MCF 10A (cell line): ENCODE measurements at regions of chr18 and their contacts with region 1.

Region 1: GRCh38 chr18:47204908-47205522 is 28.9 kb upstream of the IER3IP1 start:
- DNase-seq: peak; percentile 61
- H3K4me3 Mint-ChIP-seq: no peak overlapping the region
- H3K27ac Mint-ChIP-seq: no peak overlapping the region
- H3K4me1 Mint-ChIP-seq: no peaks in the 10 kb centered on the region
- H3K27me3 Mint-ChIP-seq: peaks cover 62% of the 10 kb centered on the region
- CTCF ChIP-seq: peak; percentile 86

Region 2: GRCh38 chr18:47067648-47068047 is 137.4 kb before region 1 on chr18:
- CTCF ChIA-PET with region 1: interaction called, 20 read pairs
- POLR2A ChIA-PET with region 1: no interaction called
- intact Hi-C with region 1: no loop called
- DNase-seq: no peak
- H3K4me3 Mint-ChIP-seq: no peak overlapping the region
- H3K27ac Mint-ChIP-seq: no peak overlapping the region
- H3K4me1 Mint-ChIP-seq: no peaks in the 10 kb centered on the region
- H3K27me3 Mint-ChIP-seq: no peaks in the 10 kb centered on the region
- CTCF ChIP-seq: no peak

Region 3: GRCh38 chr18:47113796-47114540 is 91.0 kb before region 1 on chr18:
- CTCF ChIA-PET with region 1: interaction called, 25 read pairs
- POLR2A ChIA-PET with region 1: no interaction called
- intact Hi-C with region 1: no loop called
- DNase-seq: no peak
- H3K4me3 Mint-ChIP-seq: no peak overlapping the region
- H3K27ac Mint-ChIP-seq: no peak overlapping the region
- H3K4me1 Mint-ChIP-seq: peaks cover 5% of the 10 kb centered on the region
- H3K27me3 Mint-ChIP-seq: no peaks in the 10 kb centered on the region
- CTCF ChIP-seq: no peak

Region 4: GRCh38 chr18:47191961-47192360 is 13.1 kb before region 1 on chr18:
- CTCF ChIA-PET with region 1: interaction called, 60 read pairs
- POLR2A ChIA-PET with region 1: interaction called, 4 read pairs
- intact Hi-C with region 1: no loop called
- DNase-seq: peak; percentile 62
- H3K4me3 Mint-ChIP-seq: no peak overlapping the region
- H3K27ac Mint-ChIP-seq: no peak overlapping the region
- H3K4me1 Mint-ChIP-seq: no peaks in the 10 kb centered on the region
- H3K27me3 Mint-ChIP-seq: peaks cover 61% of the 10 kb centered on the region
- CTCF ChIP-seq: no peak

Region 5: DNA sequence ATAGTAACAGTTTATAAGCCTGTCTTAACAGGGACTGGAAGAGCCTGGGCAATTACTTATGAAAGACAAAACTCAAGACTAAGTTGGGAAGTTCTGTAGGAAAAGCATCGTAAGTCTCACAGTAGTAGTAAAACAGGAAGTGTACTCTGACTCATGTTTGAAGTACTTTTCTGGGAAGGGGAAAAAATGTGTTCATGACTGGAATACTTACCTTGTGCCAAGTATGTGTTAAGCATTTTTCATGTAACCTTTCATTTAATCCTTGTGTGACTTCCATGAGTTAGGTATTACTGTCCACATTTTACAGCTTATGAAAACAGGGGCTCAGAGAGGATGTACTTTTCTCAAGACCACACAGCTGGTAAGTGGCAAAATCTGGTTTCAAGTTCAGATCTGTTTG is 60.2 kb after region 1 on chr18:
- CTCF ChIA-PET with region 1: no interaction called
- POLR2A ChIA-PET with region 1: no interaction called
- intact Hi-C with region 1: no loop called
- DNase-seq: peak; percentile 68
- H3K4me3 Mint-ChIP-seq: no peak overlapping the region
- H3K27ac Mint-ChIP-seq: no peak overlapping the region
- H3K4me1 Mint-ChIP-seq: peaks cover 7% of the 10 kb centered on the region
- H3K27me3 Mint-ChIP-seq: peaks cover 14% of the 10 kb centered on the region
- CTCF ChIP-seq: no peak

Region 6: DNA sequence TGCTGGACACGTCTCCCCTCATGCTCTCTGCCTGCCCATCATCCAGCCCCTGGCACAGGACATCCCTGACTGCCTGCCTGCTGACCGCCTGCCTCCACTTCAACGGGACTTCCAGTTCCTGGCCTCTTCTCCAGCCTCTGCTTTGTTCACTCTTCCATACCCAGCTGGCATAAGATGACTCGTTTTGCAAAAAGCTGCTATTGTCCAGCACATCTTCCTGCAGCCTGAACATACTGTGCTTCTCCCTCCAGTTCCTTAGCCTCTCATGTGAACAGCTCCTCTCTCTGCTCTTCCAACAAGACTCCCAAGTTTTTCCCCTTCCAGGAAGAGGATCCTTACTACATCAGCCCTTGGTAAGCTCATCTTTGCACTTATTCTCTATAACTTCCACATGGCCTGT is 108.9 kb after region 1 on chr18:
- CTCF ChIA-PET with region 1: no interaction called
- POLR2A ChIA-PET with region 1: no interaction called
- intact Hi-C with region 1: no loop called
- DNase-seq: no peak
- H3K4me3 Mint-ChIP-seq: no peak overlapping the region
- H3K27ac Mint-ChIP-seq: no peak overlapping the region
- H3K4me1 Mint-ChIP-seq: no peaks in the 10 kb centered on the region
- H3K27me3 Mint-ChIP-seq: peaks cover 46% of the 10 kb centered on the region
- CTCF ChIP-seq: no peak

Region 7: DNA sequence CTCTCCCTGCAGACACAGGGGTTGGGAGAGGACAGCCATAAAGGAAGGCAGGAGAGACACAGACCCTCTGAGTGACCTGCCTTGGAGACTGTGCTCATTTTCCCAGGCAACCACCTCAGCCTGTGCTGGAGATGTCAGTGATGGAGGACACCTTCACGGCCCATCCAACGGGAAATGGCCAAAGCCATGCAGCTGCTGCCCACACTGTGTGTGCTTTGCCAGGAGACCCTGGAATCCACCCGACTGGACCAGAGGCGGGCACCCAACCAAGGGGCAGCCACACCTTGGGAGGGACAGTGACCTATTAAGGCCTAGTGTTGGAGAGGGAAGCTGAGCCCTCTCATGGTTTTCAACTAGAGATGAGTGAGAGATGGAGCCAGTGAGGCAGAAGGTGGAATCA is 532.9 kb after region 1 on chr18:
- CTCF ChIA-PET with region 1: interaction called, 13 read pairs
- POLR2A ChIA-PET with region 1: no interaction called
- intact Hi-C with region 1: no loop called
- DNase-seq: no peak
- H3K4me3 Mint-ChIP-seq: no peak overlapping the region
- H3K27ac Mint-ChIP-seq: no peak overlapping the region
- H3K4me1 Mint-ChIP-seq: no peaks in the 10 kb centered on the region
- H3K27me3 Mint-ChIP-seq: peaks cover 93% of the 10 kb centered on the region
- CTCF ChIP-seq: no peak